T-cell (primary cell): ENCODE measurements at regions of chr14 and their contacts with region 1.

Region 1: GRCh38 chr14:59986556-59987059 is 66.7 kb downstream of the LRRC9 start:
- DNase-seq: no peak
- ATAC-seq: no peak
- H3K4me3 ChIP-seq: no peak overlapping the region
- H3K4me3 Mint-ChIP-seq: no peak overlapping the region
- H3K27ac ChIP-seq: no peak overlapping the region
- H3K27ac Mint-ChIP-seq: no peak overlapping the region
- H3K4me1 ChIP-seq: no peaks in the 10 kb centered on the region
- H3K4me1 Mint-ChIP-seq: no peaks in the 10 kb centered on the region
- H3K27me3 ChIP-seq: peaks cover 0 to 8% of the 10 kb centered on the region in 2 experiments
- H3K27me3 Mint-ChIP-seq: peaks cover 6 to 8% of the 10 kb centered on the region in 2 donors

Region 2: GRCh38 chr14:59897761-59898383 is 88.7 kb before region 1 on chr14:
- CTCF ChIA-PET with region 1: no interaction called
- POLR2A ChIA-PET with region 1: interaction called in 1 of 2 experiments, 12 read pairs
- DNase-seq: no peak
- ATAC-seq: no peak
- H3K4me3 ChIP-seq: no peak overlapping the region
- H3K4me3 Mint-ChIP-seq: no peak overlapping the region
- H3K27ac ChIP-seq: no peak overlapping the region
- H3K27ac Mint-ChIP-seq: no peak overlapping the region
- H3K4me1 ChIP-seq: no peaks in the 10 kb centered on the region
- H3K4me1 Mint-ChIP-seq: no peaks in the 10 kb centered on the region
- H3K27me3 ChIP-seq: no peaks in the 10 kb centered on the region
- H3K27me3 Mint-ChIP-seq: peaks cover 21 to 33% of the 10 kb centered on the region in 2 donors

Region 3: DNA sequence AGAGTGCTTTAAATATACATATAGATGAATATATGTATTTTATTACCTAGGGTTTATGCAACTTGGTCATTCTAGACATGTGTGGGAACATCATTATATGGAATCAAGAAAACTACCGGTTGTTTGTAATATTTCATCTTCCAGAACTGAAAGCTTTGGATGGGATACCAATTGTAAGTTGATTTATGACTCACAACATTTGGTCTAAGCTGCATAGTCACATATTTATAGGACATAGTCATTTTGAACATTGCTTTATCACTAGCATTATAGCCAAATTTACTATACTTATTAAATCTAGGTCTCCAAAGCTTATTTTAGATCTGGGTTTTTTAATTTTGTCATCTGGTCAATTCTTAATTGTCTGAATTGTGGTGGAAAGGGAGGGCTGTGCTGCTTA is 21.4 kb after region 1 on chr14:
- CTCF ChIA-PET with region 1: no interaction called
- POLR2A ChIA-PET with region 1: no interaction called
- DNase-seq: no peak
- ATAC-seq: no peak
- H3K4me3 ChIP-seq: no peak overlapping the region
- H3K4me3 Mint-ChIP-seq: no peak overlapping the region
- H3K27ac ChIP-seq: no peak overlapping the region
- H3K27ac Mint-ChIP-seq: no peak overlapping the region
- H3K4me1 ChIP-seq: no peaks in the 10 kb centered on the region
- H3K4me1 Mint-ChIP-seq: no peaks in the 10 kb centered on the region
- H3K27me3 ChIP-seq: peaks cover 0 to 6% of the 10 kb centered on the region in 2 experiments
- H3K27me3 Mint-ChIP-seq: peaks cover 5 to 6% of the 10 kb centered on the region in 2 donors